ENCODE measurements at regions of chr9 and their contacts with region 1.

Region 1: GRCh38 chr9:31304576-31304975 is 1079.9 kb upstream of the ACO1 start:
- DNase-seq: peak; percentile 23
- ATAC-seq: peak; percentile 54; the same call in 1 of the 2 replicates
- H3K4me3 ChIP-seq: no peak overlapping the region
- H3K27ac ChIP-seq: no peak overlapping the region
- H3K4me1 ChIP-seq: peaks cover 0 to 12% of the 10 kb centered on the region in 2 experiments; a peak in 2 of 4 replicates
- H3K27me3 ChIP-seq: no peaks in the 10 kb centered on the region
- CTCF ChIP-seq: no peak
- POLR2A ChIP-seq: no peak
- RAD21 ChIP-seq: no peak

Region 2: DNA sequence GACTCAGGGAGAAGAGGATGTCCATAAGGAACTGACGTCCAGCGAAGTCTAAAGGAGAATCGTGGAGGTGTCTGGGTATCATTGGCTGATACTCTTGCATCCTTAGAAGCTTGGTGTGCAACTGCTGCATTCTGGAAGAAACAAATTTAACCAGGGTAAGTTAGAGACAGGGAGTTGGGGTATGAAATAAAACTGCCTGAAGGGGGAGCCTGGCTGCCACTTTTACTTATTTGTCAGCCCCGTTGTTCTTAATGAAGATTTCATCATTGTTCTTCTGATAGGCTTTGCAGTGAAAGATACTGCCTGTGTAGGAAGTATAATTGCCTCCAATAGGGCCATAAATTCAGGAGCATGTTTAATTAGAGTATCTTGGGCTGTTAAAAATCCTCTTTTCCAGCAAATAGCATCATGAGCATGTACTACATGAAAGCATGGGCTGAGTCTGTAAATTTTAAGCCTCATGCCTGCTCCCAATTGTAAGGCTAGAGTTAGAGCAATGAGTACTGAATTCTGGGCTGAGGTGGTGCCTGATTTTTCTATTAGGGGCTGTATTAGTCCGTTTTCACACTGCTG is 184.6 kb before region 1 on chr9:
- CTCF ChIA-PET with region 1: interaction called, 5 read pairs
- POLR2A ChIA-PET with region 1: no interaction called
- RAD21 ChIA-PET with region 1: no interaction called
- intact Hi-C with region 1: loop called (anchors 10 kb)
- DNase-seq: peak; percentile 6
- ATAC-seq: peak; percentile 77
- H3K4me3 ChIP-seq: no peak overlapping the region
- H3K27ac ChIP-seq: no peak overlapping the region
- H3K4me1 ChIP-seq: no peaks in the 10 kb centered on the region
- H3K27me3 ChIP-seq: no peaks in the 10 kb centered on the region
- CTCF ChIP-seq: peak; percentile 24 to 49 (median 34); a peak in 5 of 6 replicates
- POLR2A ChIP-seq: no peak
- RAD21 ChIP-seq: peak; percentile 59